ENCODE measurements at regions of chr15 and their contacts with region 1.

Region 1: GRCh38 chr15:48285329-48286214 is 45.7 kb upstream of the DUT start:
- DNase-seq: peak; percentile 11 to 89
- H3K4me3 ChIP-seq: peak overlapping the region; percentile 35 to 49
- H3K27ac ChIP-seq: peak overlapping the region; percentile 70 to 81
- H3K4me1 ChIP-seq: peaks cover 9 to 20% of the 10 kb centered on the region in 2 donors
- H3K27me3 ChIP-seq: no peaks in the 10 kb centered on the region
- CTCF ChIP-seq: peak; percentile 63 to 75 (median 75)

Region 2: DNA sequence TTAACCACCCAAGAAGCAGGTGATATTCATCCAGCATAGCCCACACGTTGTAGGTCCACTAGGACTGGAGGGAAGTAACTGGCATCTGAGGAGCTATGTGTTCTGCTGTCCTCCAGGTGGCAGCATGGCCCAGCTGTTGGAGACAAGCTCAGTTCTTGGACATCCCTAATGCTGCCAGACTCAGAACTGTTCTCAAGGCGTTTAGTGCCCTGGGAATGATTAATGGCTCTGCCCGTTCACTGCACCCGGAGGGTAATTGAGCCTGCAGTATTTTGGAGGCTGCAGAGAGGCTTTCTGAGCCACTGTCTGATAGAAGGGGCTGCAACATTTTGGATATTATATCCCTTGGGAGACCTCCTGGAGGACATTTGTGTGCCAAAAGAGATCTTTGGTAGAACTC is 1089.5 kb before region 1 on chr15:
- intact Hi-C with region 1: loop called (anchors 2 kb)
- DNase-seq: peak in 1 of 2 donors; percentile 85
- H3K4me3 ChIP-seq: no peak overlapping the region
- H3K27ac ChIP-seq: no peak overlapping the region
- H3K4me1 ChIP-seq: no peaks in the 10 kb centered on the region
- H3K27me3 ChIP-seq: no peaks in the 10 kb centered on the region
- CTCF ChIP-seq: peak; percentile 77 to 87 (median 81)

Region 3: GRCh38 chr15:47987908-47988532 is 297.6 kb before region 1 on chr15:
- intact Hi-C with region 1: loop called (anchors 5 kb)
- DNase-seq: no peak
- H3K4me3 ChIP-seq: no peak overlapping the region
- H3K27ac ChIP-seq: no peak overlapping the region
- H3K4me1 ChIP-seq: no peaks in the 10 kb centered on the region
- H3K27me3 ChIP-seq: no peaks in the 10 kb centered on the region
- CTCF ChIP-seq: peak; percentile 52 to 71 (median 56)

Region 4: DNA sequence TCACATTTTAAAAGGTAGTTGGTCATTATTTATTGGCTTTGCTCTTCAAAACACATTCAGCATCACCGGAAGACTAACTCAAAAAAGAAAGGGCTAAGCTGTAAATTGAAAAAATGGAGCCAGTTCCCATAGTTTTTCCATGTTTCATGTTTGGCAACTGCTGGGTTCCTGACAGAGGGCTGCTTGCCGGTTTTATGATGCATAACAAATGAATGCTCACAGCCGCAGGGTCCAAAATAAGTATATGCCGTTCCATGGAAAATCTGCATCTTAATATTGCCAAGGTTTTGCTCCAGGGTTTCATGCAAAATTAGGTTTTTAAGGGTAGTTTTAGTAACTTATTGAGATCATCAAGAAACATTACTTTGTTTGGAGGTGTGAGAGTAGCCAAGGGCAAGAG is 63.7 kb before region 1 on chr15:
- intact Hi-C with region 1: loop called (anchors 2 kb)
- DNase-seq: peak in 1 of 2 donors; percentile 88
- H3K4me3 ChIP-seq: peak overlapping the region in 1 of 2 donors; percentile 35
- H3K27ac ChIP-seq: peak overlapping the region; percentile 79 to 87
- H3K4me1 ChIP-seq: peaks cover 3 to 40% of the 10 kb centered on the region in 2 donors
- H3K27me3 ChIP-seq: no peaks in the 10 kb centered on the region
- CTCF ChIP-seq: no peak

Region 5: DNA sequence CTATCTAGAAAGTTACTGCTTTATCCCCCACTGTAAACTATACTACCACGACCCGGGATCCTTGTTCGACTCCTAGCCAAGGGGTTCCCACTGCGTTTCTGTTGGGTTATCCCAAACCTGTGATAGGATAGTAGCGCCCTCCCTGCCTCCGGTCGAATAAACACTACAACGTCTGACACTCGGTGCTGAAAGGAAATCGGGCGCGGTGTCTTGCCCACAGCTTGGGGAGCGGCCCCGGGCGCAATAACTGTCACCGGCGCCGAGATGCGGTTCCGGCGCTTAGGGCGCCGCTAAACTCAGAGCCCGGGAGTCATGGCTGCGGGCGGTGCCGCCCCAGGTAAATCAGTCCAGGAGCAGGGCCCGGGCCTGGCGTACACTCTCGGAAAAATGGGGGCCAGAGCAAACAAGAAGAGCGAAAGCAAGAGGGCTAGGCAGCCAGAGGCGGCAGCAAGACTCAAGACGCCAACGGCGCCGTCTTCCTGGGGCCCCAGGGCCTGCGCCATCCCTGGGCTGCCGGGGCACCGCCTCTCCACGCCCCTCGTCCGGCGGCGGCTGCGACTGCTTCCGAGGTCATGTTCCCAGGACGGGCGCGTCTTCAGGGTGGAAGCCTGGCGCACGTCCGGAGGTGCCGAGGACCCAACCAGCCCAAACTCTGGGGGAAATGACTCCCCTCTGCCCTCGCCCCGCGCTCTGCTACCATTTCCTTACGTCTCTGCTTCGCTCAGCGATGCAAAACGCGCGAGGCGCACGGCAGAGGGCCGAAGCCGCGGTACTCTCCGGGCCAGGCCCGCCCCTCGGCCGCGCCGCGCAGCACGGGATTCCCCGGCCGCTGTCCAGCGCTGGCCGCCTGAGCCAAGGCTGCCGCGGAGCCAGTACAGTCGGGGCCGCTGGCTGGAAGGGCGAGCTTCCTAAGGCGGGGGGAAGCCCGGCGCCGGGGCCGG is 45.6 kb after region 1 on chr15 and contains the start of gene DUT:
- intact Hi-C with region 1: loop called (anchors 1 kb)
- DNase-seq: peak; percentile 27 to 91
- H3K4me3 ChIP-seq: peak within 1 kb of the TSS; percentile 70 to 89
- H3K27ac ChIP-seq: peak within 1 kb of the TSS; percentile 92 to 98
- H3K4me1 ChIP-seq: peaks cover 4 to 12% of the 10 kb centered on the region in 2 donors
- H3K27me3 ChIP-seq: no peaks in the 10 kb centered on the region
- CTCF ChIP-seq: no peak
- total RNA-seq, gene DUT: 150 TPM